CD8-positive, alpha-beta memory T cell (primary cell): ENCODE measurements at regions of chr1 and their contacts with region 1.

Region 1: GRCh38 chr1:7940745-7941436 is at the start of gene TNFRSF9:
- DNase-seq: peak in 4 of 5 donors; percentile 30 to 76 (median 60)
- H3K4me3 ChIP-seq: no peak within 1 kb of the TSS
- H3K4me3 Mint-ChIP-seq: peak within 1 kb of the TSS; percentile 76 to 87 (median 82)
- H3K27ac ChIP-seq: no peak within 1 kb of the TSS
- H3K27ac Mint-ChIP-seq: peak within 1 kb of the TSS in 7 of 8 donors; percentile 75 to 96 (median 87)
- H3K4me1 ChIP-seq: peaks cover 25% of the 10 kb centered on the region
- H3K4me1 Mint-ChIP-seq: peaks cover 52 to 65% (median 63%) of the 10 kb centered on the region in 3 donors
- H3K27me3 ChIP-seq: no peaks in the 10 kb centered on the region
- H3K27me3 Mint-ChIP-seq: peaks cover 8 to 29% of the 10 kb centered on the region in 2 donors
- total RNA-seq, gene TNFRSF9: 273 to 279 TPM

Region 2: DNA sequence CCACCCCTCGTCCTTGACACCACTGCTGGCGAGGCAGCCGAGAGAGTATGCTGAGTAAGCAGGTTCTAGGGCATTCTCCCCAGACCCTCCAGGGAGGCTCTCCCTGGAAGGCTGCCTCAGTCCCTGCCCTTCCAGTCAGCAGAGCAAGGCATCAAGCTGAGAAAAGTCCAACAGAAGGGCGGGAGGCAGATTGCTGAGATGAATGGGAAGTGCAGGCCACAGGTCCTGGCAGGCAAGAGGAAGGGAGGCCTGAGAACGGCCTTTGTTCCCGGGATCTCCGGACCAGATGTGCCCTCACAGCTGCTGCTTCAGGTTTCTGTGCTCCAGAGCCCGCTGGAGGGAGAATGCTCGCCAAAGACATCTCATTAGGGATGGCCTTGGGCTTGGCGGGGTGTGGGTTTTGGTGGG is 439.8 kb before region 1 on chr1:
- CTCF ChIA-PET with region 1: no interaction called
- POLR2A ChIA-PET with region 1: no interaction called
- DNase-seq: peak in 1 of 5 donors; percentile 19
- H3K4me3 ChIP-seq: no peak overlapping the region
- H3K4me3 Mint-ChIP-seq: no peak overlapping the region
- H3K27ac ChIP-seq: no peak overlapping the region
- H3K27ac Mint-ChIP-seq: no peak overlapping the region
- H3K4me1 ChIP-seq: no peaks in the 10 kb centered on the region
- H3K4me1 Mint-ChIP-seq: no peaks in the 10 kb centered on the region
- H3K27me3 ChIP-seq: no peaks in the 10 kb centered on the region
- H3K27me3 Mint-ChIP-seq: peaks cover 0 to 2% of the 10 kb centered on the region in 2 donors

Region 3: DNA sequence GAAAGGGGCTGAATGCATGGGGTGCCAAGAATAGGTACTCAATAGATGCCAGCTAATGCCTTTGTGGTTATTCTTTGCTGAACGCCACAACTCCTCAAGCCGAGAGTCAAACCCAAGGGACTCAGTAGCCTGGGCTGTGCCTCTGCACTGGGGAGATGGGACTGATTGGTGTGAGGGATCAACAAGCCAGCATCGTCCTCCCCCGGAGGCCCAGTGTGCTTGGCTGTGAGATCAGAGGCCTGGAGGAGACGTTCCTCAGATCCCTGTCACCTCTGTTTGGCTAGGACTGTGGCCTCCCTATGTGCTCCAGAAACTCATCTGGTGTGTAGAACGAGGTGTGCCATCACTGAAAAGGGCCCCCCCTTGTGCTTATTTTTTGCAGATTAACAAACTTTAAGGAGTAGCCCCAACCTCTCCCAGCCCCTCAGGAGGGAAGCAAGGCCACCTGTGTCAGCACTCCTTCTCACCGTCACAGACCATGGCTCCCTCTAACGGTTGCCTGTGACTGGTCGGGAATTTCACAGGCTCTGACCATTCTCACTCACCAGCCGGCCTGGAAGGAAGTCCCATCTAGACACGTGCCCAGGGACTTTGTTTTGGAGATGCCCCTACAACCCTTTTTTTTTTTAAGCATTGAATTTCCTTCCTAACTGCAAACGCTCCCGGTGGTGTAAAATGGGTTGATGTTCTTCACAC is 363.8 kb before region 1 on chr1:
- CTCF ChIA-PET with region 1: no interaction called
- POLR2A ChIA-PET with region 1: no interaction called
- DNase-seq: no peak
- H3K4me3 ChIP-seq: no peak overlapping the region
- H3K4me3 Mint-ChIP-seq: no peak overlapping the region
- H3K27ac ChIP-seq: no peak overlapping the region
- H3K27ac Mint-ChIP-seq: no peak overlapping the region
- H3K4me1 ChIP-seq: no peaks in the 10 kb centered on the region
- H3K4me1 Mint-ChIP-seq: no peaks in the 10 kb centered on the region
- H3K27me3 ChIP-seq: no peaks in the 10 kb centered on the region
- H3K27me3 Mint-ChIP-seq: peaks cover 3 to 29% of the 10 kb centered on the region in 2 donors

Region 4: GRCh38 chr1:7912743-7913557 is 27.9 kb before region 1 on chr1:
- CTCF ChIA-PET with region 1: interaction called, 9 read pairs
- POLR2A ChIA-PET with region 1: interaction called, 11 read pairs
- DNase-seq: peak in 1 of 5 donors; percentile 22
- H3K4me3 ChIP-seq: no peak overlapping the region
- H3K4me3 Mint-ChIP-seq: peak overlapping the region; percentile 74 to 88 (median 78)
- H3K27ac ChIP-seq: no peak overlapping the region
- H3K27ac Mint-ChIP-seq: peak overlapping the region; percentile 2 to 90 (median 78)
- H3K4me1 ChIP-seq: peaks cover 7% of the 10 kb centered on the region
- H3K4me1 Mint-ChIP-seq: peaks cover 31 to 39% (median 38%) of the 10 kb centered on the region in 3 donors
- H3K27me3 ChIP-seq: no peaks in the 10 kb centered on the region
- H3K27me3 Mint-ChIP-seq: no peaks in the 10 kb centered on the region

Region 5: GRCh38 chr1:8004803-8005554 is 64.1 kb after region 1 on chr1:
- CTCF ChIA-PET with region 1: no interaction called
- POLR2A ChIA-PET with region 1: no interaction called
- DNase-seq: no peak
- H3K4me3 ChIP-seq: no peak overlapping the region
- H3K4me3 Mint-ChIP-seq: no peak overlapping the region
- H3K27ac ChIP-seq: no peak overlapping the region
- H3K27ac Mint-ChIP-seq: peak overlapping the region in 1 of 8 donors; percentile 19
- H3K4me1 ChIP-seq: no peaks in the 10 kb centered on the region
- H3K4me1 Mint-ChIP-seq: no peaks in the 10 kb centered on the region
- H3K27me3 ChIP-seq: no peaks in the 10 kb centered on the region
- H3K27me3 Mint-ChIP-seq: no peaks in the 10 kb centered on the region